Naive thymus-derived CD8-positive, alpha-beta T cell (primary cell): ENCODE measurements at regions of chr3 and their contacts with region 1.

Region 1: GRCh38 chr3:45688882-45689756 is at the start of gene SACM1L:
- DNase-seq: peak; percentile 89 to 97 (median 94)
- ATAC-seq: peak; percentile 82 to 83
- H3K4me3 Mint-ChIP-seq: peak within 1 kb of the TSS; percentile 85 to 97 (median 93)
- H3K27ac Mint-ChIP-seq: peak within 1 kb of the TSS; percentile 94 to 100 (median 98)
- H3K4me1 Mint-ChIP-seq: peaks cover 28 to 70% (median 65%) of the 10 kb centered on the region in 4 donors
- H3K27me3 Mint-ChIP-seq: peaks cover 0 to 3% (median 0%) of the 10 kb centered on the region in 5 donors
- polyA plus RNA-seq, gene SACM1L: 18.8 to 30.3 (median 18.8) TPM

Region 2: GRCh38 chr3:45437383-45437782 is 251.7 kb before region 1 on chr3:
- POLR2A ChIA-PET with region 1: no interaction called
- DNase-seq: no peak
- ATAC-seq: no peak
- H3K4me3 Mint-ChIP-seq: no peak overlapping the region
- H3K27ac Mint-ChIP-seq: no peak overlapping the region
- H3K4me1 Mint-ChIP-seq: peaks cover 5 to 19% (median 12%) of the 10 kb centered on the region in 4 donors
- H3K27me3 Mint-ChIP-seq: no peaks in the 10 kb centered on the region

Region 3: GRCh38 chr3:45635477-45636256 is 53.5 kb before region 1 on chr3:
- POLR2A ChIA-PET with region 1: no interaction called
- DNase-seq: no peak
- ATAC-seq: no peak
- H3K4me3 Mint-ChIP-seq: no peak overlapping the region
- H3K27ac Mint-ChIP-seq: peak overlapping the region in 1 of 10 donors; percentile 78
- H3K4me1 Mint-ChIP-seq: peaks cover 7 to 32% (median 21%) of the 10 kb centered on the region in 4 donors
- H3K27me3 Mint-ChIP-seq: no peaks in the 10 kb centered on the region

Region 4: GRCh38 chr3:45665101-45665572 is 24.0 kb before region 1 on chr3:
- POLR2A ChIA-PET with region 1: interaction called, 21 read pairs
- DNase-seq: peak; percentile 27 to 85 (median 66)
- ATAC-seq: peak; percentile 49 to 53
- H3K4me3 Mint-ChIP-seq: peak overlapping the region; percentile 82 to 96 (median 90)
- H3K27ac Mint-ChIP-seq: peak overlapping the region; percentile 85 to 98 (median 96)
- H3K4me1 Mint-ChIP-seq: peaks cover 17 to 38% (median 29%) of the 10 kb centered on the region in 4 donors
- H3K27me3 Mint-ChIP-seq: no peaks in the 10 kb centered on the region

Region 5: DNA sequence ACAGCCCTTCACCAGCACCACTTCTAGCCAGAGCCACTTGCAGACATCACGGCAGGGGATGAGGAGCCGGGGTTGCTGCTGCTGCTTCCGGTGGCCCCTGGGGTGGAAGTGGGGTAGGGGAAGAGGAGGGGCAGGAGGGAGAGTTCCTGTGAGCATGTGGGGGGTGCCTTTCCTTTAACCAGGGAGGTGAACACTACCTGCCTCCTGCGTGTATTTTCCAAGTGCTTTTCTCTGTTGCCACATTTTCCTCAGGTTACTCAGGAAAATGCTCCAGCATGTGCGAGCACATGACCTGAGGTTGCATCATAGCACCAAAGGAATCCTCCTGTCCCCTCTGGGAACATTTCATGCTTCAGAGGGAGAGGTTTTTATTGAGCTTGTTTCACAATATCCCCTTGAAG is 12.1 kb before region 1 on chr3:
- POLR2A ChIA-PET with region 1: interaction called, 46 read pairs
- DNase-seq: peak; percentile 48 to 86 (median 68)
- ATAC-seq: peak; percentile 99 to 100
- H3K4me3 Mint-ChIP-seq: peak overlapping the region; percentile 69 to 91 (median 79)
- H3K27ac Mint-ChIP-seq: peak overlapping the region; percentile 94 to 99 (median 97)
- H3K4me1 Mint-ChIP-seq: peaks cover 15 to 48% (median 31%) of the 10 kb centered on the region in 4 donors
- H3K27me3 Mint-ChIP-seq: no peaks in the 10 kb centered on the region

Region 6: DNA sequence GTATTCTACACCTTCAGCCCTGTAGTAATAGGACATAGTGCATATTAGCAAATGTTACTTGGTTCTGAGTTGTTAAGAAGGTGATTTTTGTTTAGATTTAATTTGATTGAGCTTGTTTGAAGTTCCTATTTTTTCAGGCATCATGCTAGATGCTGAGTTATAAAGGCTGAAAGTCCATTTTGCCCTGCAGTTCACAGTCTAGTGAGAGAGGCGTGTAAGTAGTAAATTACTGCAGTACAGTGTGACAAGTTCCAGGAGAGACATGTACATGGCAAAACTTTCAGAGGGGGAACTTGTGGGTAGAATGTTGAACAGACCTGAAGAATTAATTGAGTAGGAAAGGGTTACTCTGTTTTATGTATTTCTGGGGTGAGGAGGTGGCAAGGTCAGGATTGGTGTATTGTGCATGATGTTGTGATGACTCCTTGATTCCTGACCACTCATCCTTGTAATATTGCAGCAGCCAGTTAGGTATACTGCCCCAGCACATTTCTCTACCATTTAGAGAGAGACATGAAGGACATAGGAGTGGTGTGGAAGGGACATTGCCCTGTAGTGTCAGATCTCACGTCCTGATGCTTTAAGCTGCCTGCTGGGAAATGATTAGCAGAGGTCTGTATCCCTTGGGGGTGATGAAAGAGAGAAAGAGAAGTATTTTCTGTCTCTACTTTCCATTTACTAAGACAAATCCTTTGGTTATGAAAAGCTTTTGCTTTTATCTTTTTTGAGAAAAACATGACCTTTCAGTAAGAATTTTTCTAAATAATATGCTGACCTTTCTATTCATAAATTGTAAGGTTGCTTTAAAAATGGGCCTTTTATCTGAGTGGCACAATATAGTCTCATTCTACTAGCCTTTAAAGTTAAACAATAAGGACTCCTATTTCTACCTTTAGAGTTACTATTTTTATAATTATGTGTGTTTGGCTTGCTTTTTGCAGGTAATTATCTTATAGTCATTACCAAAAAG is 17.0 kb after region 1 on chr3:
- POLR2A ChIA-PET with region 1: interaction called, 17 read pairs
- DNase-seq: no peak
- ATAC-seq: no peak
- H3K4me3 Mint-ChIP-seq: no peak overlapping the region
- H3K27ac Mint-ChIP-seq: peak overlapping the region in 7 of 10 donors; percentile 6 to 73 (median 38)
- H3K4me1 Mint-ChIP-seq: peaks cover 26 to 55% (median 48%) of the 10 kb centered on the region in 4 donors
- H3K27me3 Mint-ChIP-seq: no peaks in the 10 kb centered on the region

Region 7: DNA sequence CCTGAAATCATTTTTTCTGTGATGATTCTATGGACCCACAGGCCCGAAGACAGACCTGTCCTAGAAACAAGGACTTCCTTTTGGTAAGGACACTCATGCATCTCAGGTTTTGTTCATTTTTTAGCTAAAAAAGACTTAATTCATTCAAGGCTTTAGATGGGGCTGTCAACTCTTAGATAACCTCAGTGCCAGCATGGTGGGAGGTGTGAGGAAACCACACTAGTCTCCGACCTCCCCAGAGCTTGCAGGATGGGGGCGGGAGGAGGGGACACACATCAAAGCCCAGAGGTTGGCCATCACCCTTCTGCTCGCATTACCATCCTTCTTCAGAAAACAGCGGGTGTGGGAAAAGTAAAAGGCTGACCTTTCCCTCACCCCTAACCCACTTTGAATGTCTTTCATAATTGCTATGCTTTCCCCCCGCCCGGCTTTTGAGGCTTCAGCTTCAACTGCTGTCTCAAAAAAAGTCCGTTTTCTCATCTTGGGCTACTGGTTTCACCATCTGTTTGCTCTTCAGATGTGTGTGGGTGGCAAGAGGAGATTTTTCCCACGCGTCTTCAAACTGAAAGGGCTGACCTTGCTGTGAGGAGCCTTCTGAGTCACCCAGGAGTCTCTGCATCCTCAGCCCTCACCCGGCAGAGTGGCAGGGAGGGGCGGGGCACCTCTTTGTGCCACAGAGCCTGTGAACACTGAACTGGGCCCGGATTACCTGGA is 226.6 kb after region 1 on chr3:
- POLR2A ChIA-PET with region 1: no interaction called
- DNase-seq: peak; percentile 23 to 72 (median 46)
- ATAC-seq: peak; percentile 89 to 90
- H3K4me3 Mint-ChIP-seq: peak overlapping the region; percentile 76 to 90 (median 84)
- H3K27ac Mint-ChIP-seq: peak overlapping the region; percentile 26 to 82 (median 62)
- H3K4me1 Mint-ChIP-seq: peaks cover 12 to 52% (median 32%) of the 10 kb centered on the region in 4 donors
- H3K27me3 Mint-ChIP-seq: peaks cover 0 to 6% (median 0%) of the 10 kb centered on the region in 5 donors